Psoas muscle (tissue), 8 donors: ENCODE measurements at regions of chr2 and their contacts with region 1.

Region 1: DNA sequence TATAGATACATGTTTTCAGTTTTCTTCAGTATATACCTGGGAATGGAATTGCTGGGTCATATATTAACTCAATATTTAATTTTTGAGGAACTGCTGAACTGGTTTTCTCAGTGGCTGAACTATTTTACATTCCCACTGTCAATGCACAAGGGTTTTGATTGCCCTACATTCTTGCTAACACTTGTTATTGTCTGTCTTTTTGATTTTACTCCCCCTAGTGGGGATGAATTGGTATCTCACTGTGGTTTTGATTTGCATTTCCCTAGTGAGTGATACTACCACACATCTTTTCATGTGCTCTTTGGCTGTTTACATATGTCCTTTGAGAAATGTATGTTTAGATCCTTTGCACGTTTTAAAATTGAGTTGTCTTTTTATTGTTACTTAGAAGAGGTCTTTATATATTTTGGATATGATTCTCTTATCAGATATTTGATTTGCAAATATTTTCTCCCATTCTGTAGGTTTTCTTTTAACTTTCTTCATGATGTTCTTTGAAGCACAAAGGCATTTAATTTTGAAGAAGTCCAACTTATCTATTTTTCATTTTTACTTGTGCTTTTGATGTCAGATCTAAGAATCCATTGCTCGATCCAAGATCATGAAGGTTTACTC is 36.2 kb downstream of the ASB1 start:
- DNase-seq: no peak
- ATAC-seq: no peak
- H3K4me3 ChIP-seq: no peak overlapping the region
- H3K27ac ChIP-seq: no peak overlapping the region
- H3K4me1 ChIP-seq: peaks cover 23% of the 10 kb centered on the region
- H3K27me3 ChIP-seq: no peaks in the 10 kb centered on the region
- CTCF ChIP-seq: peak; percentile 77

Region 2: DNA sequence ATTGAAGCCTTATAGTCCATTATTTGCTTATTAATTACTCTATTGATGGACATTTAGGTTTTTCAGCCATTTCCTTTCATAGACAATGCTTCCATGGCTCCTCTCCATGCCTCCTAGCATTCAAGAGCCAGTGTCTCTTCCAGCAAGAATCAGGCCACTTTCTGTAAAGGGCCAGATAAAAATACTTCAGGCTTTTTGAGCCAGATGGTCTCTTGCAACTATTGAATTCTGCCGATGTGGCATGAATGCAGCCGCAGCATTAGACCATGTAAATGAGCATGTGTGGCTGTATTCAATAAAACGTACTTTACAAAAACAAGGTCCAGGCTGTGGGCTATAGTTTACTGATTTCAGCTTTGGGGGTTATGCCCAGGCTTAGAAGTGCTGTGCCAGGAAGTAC is 104.1 kb before region 1 on chr2:
- intact Hi-C with region 1: loop called in 1 of 2 experiments (anchors 5 kb)
- DNase-seq: no peak
- ATAC-seq: no peak
- H3K4me3 ChIP-seq: no peak overlapping the region
- H3K27ac ChIP-seq: no peak overlapping the region
- H3K4me1 ChIP-seq: peaks cover 4% of the 10 kb centered on the region
- H3K27me3 ChIP-seq: no peaks in the 10 kb centered on the region
- CTCF ChIP-seq: no peak

Region 3: DNA sequence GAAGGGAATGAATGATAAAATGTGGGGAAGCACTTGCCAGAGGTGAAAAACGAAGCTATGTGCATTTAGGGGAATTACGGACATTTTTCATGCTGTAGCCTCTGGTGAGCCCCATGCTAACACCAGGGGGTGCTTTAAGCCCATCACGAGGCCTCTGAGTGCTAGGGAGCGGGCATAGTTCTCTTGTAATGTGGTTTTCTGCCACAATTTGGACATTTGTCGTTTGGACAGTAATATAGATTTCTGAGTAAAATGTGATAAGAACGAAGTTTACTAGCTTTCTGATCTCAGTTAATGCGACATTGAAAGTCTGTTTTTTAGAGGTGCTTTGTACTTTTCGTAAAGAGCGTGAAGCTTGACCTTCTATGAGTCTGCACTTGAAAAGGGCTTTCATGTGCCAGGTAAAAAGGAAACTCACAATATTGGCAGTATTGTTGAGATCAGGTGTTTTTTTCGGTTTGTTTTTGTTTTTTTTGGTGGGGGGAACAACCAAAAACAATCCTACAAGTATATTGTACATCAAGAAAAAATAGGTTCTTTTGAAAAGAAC is 92.0 kb before region 1 on chr2:
- intact Hi-C with region 1: loop called (anchors 2 to 5 kb)
- DNase-seq: peak; percentile 39 to 75
- ATAC-seq: peak; percentile 73 to 95 (median 88)
- H3K4me3 ChIP-seq: no peak overlapping the region
- H3K27ac ChIP-seq: no peak overlapping the region
- H3K4me1 ChIP-seq: no peaks in the 10 kb centered on the region
- H3K27me3 ChIP-seq: no peaks in the 10 kb centered on the region
- CTCF ChIP-seq: peak; percentile 73

Region 4: DNA sequence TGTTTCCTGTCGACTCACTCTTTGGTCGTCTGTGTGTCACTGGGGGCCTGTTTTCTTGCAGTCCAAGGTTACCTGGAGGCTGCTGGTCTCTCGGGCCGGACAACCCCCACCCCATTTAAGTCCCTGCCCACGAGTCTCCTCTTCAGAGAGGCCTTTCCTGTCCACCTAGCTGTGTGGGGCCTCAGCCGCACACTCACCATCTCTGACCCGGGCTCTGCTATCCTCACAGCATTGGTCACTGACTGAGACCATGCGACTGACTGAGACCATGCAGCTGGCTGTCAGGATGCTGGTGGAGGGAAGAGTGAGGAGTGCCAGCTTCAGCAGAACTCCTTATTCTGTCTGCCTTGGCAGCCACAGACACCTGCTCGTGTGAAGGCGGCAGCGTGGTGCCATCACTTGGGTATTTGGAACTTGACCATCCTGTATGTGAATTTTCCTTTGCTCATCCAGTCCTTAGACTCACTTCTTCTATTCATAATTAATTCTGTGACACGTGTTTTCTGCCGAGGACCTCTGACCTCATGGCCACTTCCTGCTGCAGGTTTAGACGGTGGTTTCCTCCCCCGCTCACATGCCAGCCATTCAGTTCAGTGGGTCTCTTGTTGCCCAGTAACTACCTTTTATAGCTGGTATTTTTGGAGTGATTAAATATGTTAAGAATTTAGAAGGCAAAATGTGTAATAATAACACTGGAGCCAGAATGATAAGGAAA is 83.6 kb before region 1 on chr2:
- intact Hi-C with region 1: loop called in 1 of 2 experiments (anchors 5 kb)
- DNase-seq: no peak
- ATAC-seq: peak; percentile 22 to 36 (median 31)
- H3K4me3 ChIP-seq: no peak overlapping the region
- H3K27ac ChIP-seq: peak overlapping the region; percentile 58
- H3K4me1 ChIP-seq: peaks cover 16% of the 10 kb centered on the region
- H3K27me3 ChIP-seq: no peaks in the 10 kb centered on the region
- CTCF ChIP-seq: no peak

Region 5: GRCh38 chr2:239025096-239025801 is 562.4 kb after region 1 on chr2:
- intact Hi-C with region 1: no loop called
- DNase-seq: no peak
- ATAC-seq: no peak
- H3K4me3 ChIP-seq: no peak overlapping the region
- H3K27ac ChIP-seq: no peak overlapping the region
- H3K4me1 ChIP-seq: no peaks in the 10 kb centered on the region
- H3K27me3 ChIP-seq: peaks cover 0 to 9% (median 5%) of the 10 kb centered on the region in 3 donors
- CTCF ChIP-seq: no peak